Activated CD4-positive, alpha-beta memory T cell treated with anti-CD3 and anti-CD28 coated beads for 36 hours (primary cell): ENCODE measurements at regions of chr3 and their contacts with region 1.

Region 1: GRCh38 chr3:172595641-172596393 is 72.6 kb upstream of the TNFSF10 start:
- DNase-seq: peak; percentile 40
- H3K4me3 Mint-ChIP-seq: peak overlapping the region; percentile 79
- H3K27ac Mint-ChIP-seq: peak overlapping the region; percentile 70
- H3K4me1 Mint-ChIP-seq: peaks cover 53% of the 10 kb centered on the region
- H3K27me3 Mint-ChIP-seq: peaks cover 5% of the 10 kb centered on the region

Region 2: DNA sequence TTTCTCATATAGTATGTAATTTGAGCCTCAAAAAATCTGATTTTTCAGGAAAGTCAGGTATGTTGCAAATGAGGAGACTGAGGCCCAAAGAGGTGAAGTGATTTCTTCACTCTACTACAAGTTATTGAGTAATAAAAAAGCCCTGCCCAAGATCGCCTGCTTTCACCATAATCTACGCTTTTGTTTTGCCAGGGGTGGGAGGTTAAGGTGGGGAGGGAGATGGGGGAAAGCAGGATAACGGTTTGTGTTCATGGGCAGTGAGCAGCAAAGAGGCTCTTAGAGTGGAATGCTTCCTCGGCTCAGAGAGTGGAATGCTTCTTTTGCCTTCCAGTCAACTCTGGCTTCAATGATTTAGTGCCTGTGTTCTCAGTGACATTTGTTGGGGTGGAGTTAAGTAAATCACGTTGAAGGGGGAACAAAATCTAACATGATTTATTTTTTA is 651.3 kb before region 1 on chr3:
- CTCF ChIA-PET with region 1: no interaction called
- POLR2A ChIA-PET with region 1: no interaction called
- intact Hi-C with region 1: no loop called
- DNase-seq: no peak
- H3K4me3 Mint-ChIP-seq: no peak overlapping the region
- H3K27ac Mint-ChIP-seq: no peak overlapping the region
- H3K4me1 Mint-ChIP-seq: no peaks in the 10 kb centered on the region
- H3K27me3 Mint-ChIP-seq: peaks cover 6% of the 10 kb centered on the region

Region 3: GRCh38 chr3:172332256-172333041 is 263.4 kb before region 1 on chr3:
- CTCF ChIA-PET with region 1: interaction called, 22 read pairs
- POLR2A ChIA-PET with region 1: no interaction called
- intact Hi-C with region 1: loop called (anchors 1 kb)
- DNase-seq: peak; percentile 64
- H3K4me3 Mint-ChIP-seq: no peak overlapping the region
- H3K27ac Mint-ChIP-seq: no peak overlapping the region
- H3K4me1 Mint-ChIP-seq: peaks cover 8% of the 10 kb centered on the region
- H3K27me3 Mint-ChIP-seq: no peaks in the 10 kb centered on the region

Region 4: DNA sequence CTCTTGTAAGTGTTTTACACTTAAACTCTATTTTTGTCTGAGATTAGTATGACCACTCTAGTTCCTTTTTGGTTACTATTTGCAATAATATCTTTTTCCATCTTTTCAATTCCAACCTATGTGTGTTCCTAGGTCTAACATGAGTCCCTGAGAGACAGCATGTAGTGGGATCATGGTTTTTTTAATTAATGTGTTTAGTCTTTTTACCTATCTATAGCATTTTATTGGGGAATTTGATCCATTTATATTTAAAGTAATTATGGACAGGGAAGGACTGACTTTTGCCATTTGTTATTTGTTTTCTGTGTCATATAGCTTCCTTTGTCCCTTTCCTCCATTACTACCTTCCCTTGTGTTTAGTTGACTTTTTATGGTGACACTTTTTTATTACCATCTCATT is 94.3 kb before region 1 on chr3:
- CTCF ChIA-PET with region 1: interaction called, 51 read pairs
- POLR2A ChIA-PET with region 1: no interaction called
- intact Hi-C with region 1: no loop called
- DNase-seq: no peak
- H3K4me3 Mint-ChIP-seq: no peak overlapping the region
- H3K27ac Mint-ChIP-seq: no peak overlapping the region
- H3K4me1 Mint-ChIP-seq: peaks cover 12% of the 10 kb centered on the region
- H3K27me3 Mint-ChIP-seq: no peaks in the 10 kb centered on the region

Region 5: DNA sequence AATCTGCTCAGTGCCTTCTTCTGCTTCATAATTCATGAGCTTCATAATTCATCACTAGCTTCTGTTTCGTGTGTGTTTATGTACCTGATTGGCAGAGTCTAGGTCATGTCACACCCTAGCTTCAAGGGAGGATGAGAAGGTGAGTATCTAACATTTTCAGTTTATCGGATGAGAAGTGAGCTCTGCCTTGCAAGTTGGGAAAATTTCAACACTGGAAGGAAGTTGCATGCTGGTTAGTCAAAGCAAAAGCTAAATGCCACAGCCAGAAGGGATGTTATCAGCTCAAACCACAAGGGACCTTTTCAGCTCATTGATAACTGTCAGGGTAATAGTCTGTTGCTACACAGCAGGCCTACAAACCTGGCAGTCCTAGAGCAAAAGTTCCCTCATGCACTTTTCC is 65.3 kb before region 1 on chr3:
- CTCF ChIA-PET with region 1: interaction called, 35 read pairs
- POLR2A ChIA-PET with region 1: interaction called, 15 read pairs
- intact Hi-C with region 1: loop called (anchors 1 kb)
- DNase-seq: peak; percentile 42
- H3K4me3 Mint-ChIP-seq: peak overlapping the region; percentile 23
- H3K27ac Mint-ChIP-seq: peak overlapping the region; percentile 86
- H3K4me1 Mint-ChIP-seq: peaks cover 24% of the 10 kb centered on the region
- H3K27me3 Mint-ChIP-seq: no peaks in the 10 kb centered on the region

Region 6: DNA sequence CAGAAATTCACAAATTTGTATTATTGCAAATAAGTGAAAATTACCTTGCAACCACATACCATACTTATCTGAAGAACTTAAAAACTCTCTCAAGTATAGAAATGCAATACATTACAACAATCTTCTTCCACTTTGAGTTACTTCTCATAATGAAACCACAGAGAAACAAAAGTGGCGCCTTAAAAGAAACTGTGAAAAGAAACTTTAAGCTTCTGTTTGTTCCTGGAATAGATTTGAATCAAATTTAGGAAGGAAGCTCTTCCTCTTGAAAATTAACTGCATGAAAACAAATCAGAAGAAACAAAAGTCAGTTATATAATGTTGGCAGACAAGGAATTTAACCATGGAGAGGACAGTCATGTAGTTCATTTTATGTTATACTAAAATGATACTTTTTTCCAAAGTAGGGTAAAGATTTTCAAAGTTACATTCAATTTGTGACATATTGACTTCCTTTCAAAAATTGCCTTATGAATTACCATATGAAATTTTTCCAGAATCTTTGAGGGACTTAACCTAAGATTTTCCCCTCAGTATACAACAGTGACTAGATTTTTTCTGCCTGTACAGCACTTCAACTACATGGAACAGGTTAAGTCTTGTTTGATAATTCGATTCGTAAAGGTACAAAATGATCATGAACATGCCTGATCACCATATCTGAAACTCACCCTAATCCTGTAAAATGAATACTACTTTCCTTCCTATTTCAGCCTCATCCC is 15.0 kb before region 1 on chr3:
- CTCF ChIA-PET with region 1: interaction called, 7 read pairs
- POLR2A ChIA-PET with region 1: interaction called, 5 read pairs
- intact Hi-C with region 1: loop called (anchors 1 kb)
- DNase-seq: no peak
- H3K4me3 Mint-ChIP-seq: peak overlapping the region; percentile 18
- H3K27ac Mint-ChIP-seq: peak overlapping the region; percentile 68
- H3K4me1 Mint-ChIP-seq: peaks cover 78% of the 10 kb centered on the region
- H3K27me3 Mint-ChIP-seq: peaks cover 2% of the 10 kb centered on the region

Region 7: DNA sequence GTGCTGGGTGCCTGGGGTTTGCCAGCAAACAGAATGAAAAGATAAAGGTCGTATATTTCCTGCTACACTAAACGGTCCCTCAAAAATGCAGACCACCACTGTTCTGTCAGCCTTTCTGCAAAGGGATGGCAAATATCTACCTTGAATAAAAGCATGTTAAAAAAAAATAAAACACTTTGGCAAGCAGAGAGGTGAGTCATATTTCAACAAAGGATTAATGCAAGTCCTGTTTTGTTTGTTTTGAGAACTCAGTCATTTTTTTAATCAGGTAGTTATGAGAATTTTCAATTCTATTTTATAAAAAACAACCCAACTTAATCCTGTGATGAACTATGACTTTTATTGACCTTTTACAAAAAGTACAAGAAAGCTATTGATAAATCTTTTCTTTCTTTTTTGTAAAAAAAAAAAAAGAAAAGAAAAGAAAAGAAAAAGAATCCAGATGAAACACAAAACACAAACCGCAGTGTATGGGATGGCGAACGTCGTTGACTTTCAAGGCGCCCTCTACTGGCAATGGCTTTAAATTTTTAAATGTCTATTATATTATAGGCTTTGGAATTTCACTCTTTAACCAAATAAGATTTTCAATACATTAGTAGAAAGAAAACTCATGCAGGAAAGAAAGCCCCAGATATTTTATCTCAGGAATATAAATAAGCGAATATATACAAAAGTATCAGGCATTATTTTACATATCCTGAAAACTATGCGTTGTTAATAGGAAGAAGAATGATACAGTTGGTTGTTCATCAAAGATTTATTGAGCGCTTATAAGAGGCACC is 27.3 kb after region 1 on chr3:
- CTCF ChIA-PET with region 1: interaction called, 14 read pairs
- POLR2A ChIA-PET with region 1: no interaction called
- intact Hi-C with region 1: no loop called
- DNase-seq: peak; percentile 44
- H3K4me3 Mint-ChIP-seq: no peak overlapping the region
- H3K27ac Mint-ChIP-seq: no peak overlapping the region
- H3K4me1 Mint-ChIP-seq: peaks cover 9% of the 10 kb centered on the region
- H3K27me3 Mint-ChIP-seq: no peaks in the 10 kb centered on the region